Activated CD4-positive, alpha-beta T cell treated with anti-CD3 and anti-CD28 coated beads for 36 hours (primary cell): ENCODE measurements at regions of chr1 and their contacts with region 1.

Region 1: DNA sequence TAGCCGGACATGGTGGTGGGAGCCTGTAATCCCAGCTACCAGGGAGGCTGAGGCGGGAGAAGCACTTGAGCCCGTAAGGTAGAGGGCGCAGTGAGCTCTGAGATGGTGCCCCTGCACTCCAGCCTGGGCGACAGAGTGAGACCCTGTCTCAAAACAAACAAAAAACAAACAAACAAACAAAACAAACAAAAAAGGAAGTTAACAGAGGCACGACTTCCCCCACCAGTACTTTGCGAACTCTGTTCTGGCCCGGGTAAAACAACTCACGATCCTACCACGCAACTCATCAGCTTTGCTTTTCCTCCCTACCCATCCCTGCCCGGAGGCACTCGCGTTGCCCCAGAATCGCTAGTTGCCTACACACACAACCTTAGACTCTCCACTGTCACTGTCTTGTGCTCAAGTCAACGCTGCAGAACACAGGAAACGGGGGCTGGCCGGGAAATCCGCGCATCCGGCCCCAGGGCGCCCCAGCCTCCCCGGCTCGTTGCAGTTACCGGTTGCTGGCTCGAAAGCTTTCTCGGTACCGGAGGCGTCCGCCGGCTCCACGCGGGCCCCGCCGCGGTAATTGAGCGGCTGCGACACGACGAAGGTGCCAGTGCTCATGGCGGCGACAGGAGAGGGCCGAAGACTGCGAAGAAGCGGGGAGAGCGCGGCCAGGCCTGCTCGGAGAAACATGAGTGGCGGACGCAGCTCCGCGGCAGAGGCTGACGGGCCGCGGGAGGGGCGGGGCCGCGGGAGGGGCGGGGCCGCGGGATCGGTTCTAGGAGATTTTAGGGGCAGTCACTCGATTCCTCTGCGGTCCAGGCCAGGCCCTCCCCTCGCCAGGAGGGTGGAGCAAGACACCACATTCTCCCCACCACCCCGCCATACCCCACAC is at the start of gene ALDH9A1:
- DNase-seq: peak; percentile 90
- ATAC-seq: peak; percentile 91
- H3K4me3 Mint-ChIP-seq: peak within 1 kb of the TSS; percentile 99
- H3K27ac Mint-ChIP-seq: peak within 1 kb of the TSS; percentile 99
- H3K4me1 Mint-ChIP-seq: peaks cover 33% of the 10 kb centered on the region
- H3K27me3 Mint-ChIP-seq: no peaks in the 10 kb centered on the region
- total RNA-seq, gene ALDH9A1: 29.0 to 37.6 TPM

Region 2: GRCh38 chr1:165218731-165219130 is 479.4 kb before region 1 on chr1:
- CTCF ChIA-PET with region 1: no interaction called
- POLR2A ChIA-PET with region 1: no interaction called
- intact Hi-C with region 1: no loop called
- DNase-seq: no peak
- ATAC-seq: no peak
- H3K4me3 Mint-ChIP-seq: no peak overlapping the region
- H3K27ac Mint-ChIP-seq: no peak overlapping the region
- H3K4me1 Mint-ChIP-seq: no peaks in the 10 kb centered on the region
- H3K27me3 Mint-ChIP-seq: peaks cover 13% of the 10 kb centered on the region

Region 3: GRCh38 chr1:165392634-165393571 is 305.2 kb before region 1 on chr1:
- CTCF ChIA-PET with region 1: no interaction called
- POLR2A ChIA-PET with region 1: no interaction called
- intact Hi-C with region 1: loop called in 1 of 2 experiments (anchors 2 kb)
- DNase-seq: peak; percentile 93
- ATAC-seq: peak; percentile 95
- H3K4me3 Mint-ChIP-seq: peak overlapping the region; percentile 62
- H3K27ac Mint-ChIP-seq: peak overlapping the region; percentile 43
- H3K4me1 Mint-ChIP-seq: peaks cover 15% of the 10 kb centered on the region
- H3K27me3 Mint-ChIP-seq: peaks cover 67% of the 10 kb centered on the region

Region 4: GRCh38 chr1:165768513-165769394 is 70.6 kb after region 1 on chr1 and contains the start of gene TMCO1:
- CTCF ChIA-PET with region 1: interaction called, 3 read pairs
- POLR2A ChIA-PET with region 1: no interaction called
- intact Hi-C with region 1: loop called (anchors 1 to 2 kb)
- DNase-seq: peak; percentile 96
- ATAC-seq: peak; percentile 99
- H3K4me3 Mint-ChIP-seq: peak within 1 kb of the TSS; percentile 92
- H3K27ac Mint-ChIP-seq: peak within 1 kb of the TSS; percentile 99
- H3K4me1 Mint-ChIP-seq: peaks cover 54% of the 10 kb centered on the region
- H3K27me3 Mint-ChIP-seq: no peaks in the 10 kb centered on the region
- total RNA-seq, gene TMCO1: 57.7 to 70.5 TPM

Region 5: GRCh38 chr1:165827268-165828102 is 129.4 kb after region 1 on chr1 and contains the start of gene UCK2:
- CTCF ChIA-PET with region 1: interaction called, 3 read pairs
- POLR2A ChIA-PET with region 1: no interaction called
- intact Hi-C with region 1: loop called (anchors 1 to 5 kb)
- DNase-seq: peak; percentile 83
- ATAC-seq: peak; percentile 76
- H3K4me3 Mint-ChIP-seq: peak within 1 kb of the TSS; percentile 96
- H3K27ac Mint-ChIP-seq: peak within 1 kb of the TSS; percentile 92
- H3K4me1 Mint-ChIP-seq: peaks cover 13% of the 10 kb centered on the region
- H3K27me3 Mint-ChIP-seq: no peaks in the 10 kb centered on the region
- total RNA-seq, gene UCK2: 69.4 to 81.5 TPM

Region 6: DNA sequence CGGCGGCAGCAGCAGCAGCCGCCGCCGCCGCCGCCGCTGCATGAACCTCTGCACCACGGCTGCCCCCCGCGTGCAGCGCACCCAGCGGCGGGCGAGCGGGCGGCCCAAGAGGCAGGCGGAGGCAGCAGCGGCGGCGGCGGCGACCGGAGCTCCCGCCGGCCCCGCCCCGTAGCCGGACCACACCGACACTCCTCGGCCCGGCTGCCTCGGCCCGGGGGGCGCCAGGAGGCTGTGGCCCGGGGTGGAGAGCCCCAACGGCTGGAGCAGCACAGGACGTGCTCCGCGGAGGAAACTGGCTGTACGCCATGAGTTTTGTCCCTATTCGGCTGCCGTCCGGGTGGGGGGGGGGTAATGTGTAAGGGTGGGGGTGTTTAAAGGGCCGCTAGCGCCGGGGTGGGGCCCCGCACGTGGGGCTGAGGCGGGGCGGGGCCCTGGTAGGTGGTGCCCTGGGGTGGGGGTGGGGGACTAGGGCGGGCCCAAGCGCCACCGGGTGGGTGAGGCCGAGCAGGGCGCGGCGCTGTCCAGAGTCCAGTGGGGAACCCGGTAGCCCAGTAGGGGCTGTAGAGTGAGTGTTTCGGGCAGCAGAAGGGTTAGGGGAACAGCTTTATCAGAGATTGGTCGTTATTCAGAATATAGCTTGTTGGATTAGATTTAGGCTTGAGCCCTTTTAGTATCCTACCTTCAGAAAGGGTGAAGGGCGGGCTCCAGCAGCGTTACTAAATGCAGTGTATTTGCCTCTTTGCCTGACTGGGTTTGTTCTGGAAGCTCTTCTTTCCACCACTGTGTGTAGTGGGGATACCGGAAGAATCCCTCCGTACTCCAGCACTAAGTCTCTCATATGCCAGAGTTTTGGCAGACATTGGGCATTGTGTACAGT is 468.8 kb after region 1 on chr1 and contains the start of gene FAM78B:
- CTCF ChIA-PET with region 1: no interaction called
- POLR2A ChIA-PET with region 1: no interaction called
- intact Hi-C with region 1: loop called in 1 of 2 experiments (anchors 5 kb)
- DNase-seq: peak; percentile 74
- ATAC-seq: peak; percentile 35
- H3K4me3 Mint-ChIP-seq: peak within 1 kb of the TSS; percentile 69
- H3K27ac Mint-ChIP-seq: no peak within 1 kb of the TSS
- H3K4me1 Mint-ChIP-seq: peaks cover 29% of the 10 kb centered on the region
- H3K27me3 Mint-ChIP-seq: peaks cover 31% of the 10 kb centered on the region
- total RNA-seq, gene FAM78B: 0.34 to 0.51 TPM

Region 7: DNA sequence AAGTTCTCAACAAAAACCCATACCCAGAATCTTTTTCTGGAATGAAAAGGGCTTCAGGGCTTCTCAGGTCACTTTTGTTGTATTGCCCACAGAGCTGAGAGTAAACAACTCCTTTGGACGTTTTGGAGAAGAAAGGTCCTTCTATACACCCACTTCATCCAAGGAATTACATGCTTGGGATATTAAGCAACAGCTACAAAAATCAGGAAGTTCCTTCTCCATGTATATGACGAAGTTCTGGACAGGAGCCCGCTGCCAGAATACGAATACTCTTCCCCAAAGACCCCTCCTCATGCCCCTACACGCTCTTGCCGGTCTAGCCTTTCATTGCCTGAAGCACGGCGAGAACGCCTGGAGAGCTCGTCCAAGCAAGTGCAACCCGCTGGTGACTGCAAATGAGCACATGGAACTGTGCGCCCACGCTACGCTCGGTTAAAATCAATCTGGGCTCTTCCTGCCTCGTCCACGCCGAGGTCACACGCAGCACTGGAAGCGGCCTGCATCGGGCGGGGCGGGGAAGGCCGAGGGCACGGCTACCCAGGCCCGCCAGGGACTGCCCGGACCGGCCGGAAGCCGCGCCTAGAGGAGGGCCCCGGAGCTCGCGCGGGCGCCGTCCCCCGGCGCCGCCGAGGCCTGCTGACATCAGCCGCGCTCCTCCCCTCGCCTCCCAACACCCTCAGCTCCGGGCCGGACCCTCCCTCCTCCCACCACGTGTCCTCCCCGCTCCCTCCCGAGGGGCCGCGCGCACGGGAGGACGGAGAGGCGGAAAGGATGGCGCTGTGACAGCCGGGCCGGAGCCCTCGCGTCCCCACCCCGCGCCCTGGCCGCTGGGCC is 1140.9 kb after region 1 on chr1 and contains the start of gene POGK:
- CTCF ChIA-PET with region 1: no interaction called
- POLR2A ChIA-PET with region 1: no interaction called
- intact Hi-C with region 1: loop called in 1 of 2 experiments (anchors 5 kb)
- DNase-seq: peak; percentile 93
- ATAC-seq: peak; percentile 97
- H3K4me3 Mint-ChIP-seq: peak within 1 kb of the TSS; percentile 90
- H3K27ac Mint-ChIP-seq: peak within 1 kb of the TSS; percentile 98
- H3K4me1 Mint-ChIP-seq: peaks cover 56% of the 10 kb centered on the region
- H3K27me3 Mint-ChIP-seq: no peaks in the 10 kb centered on the region
- total RNA-seq, gene POGK: 36.2 to 40.6 TPM